Left ventricle myocardium superior (tissue), 1 donor: ENCODE measurements at regions of chr3 and their contacts with region 1.

Region 1: DNA sequence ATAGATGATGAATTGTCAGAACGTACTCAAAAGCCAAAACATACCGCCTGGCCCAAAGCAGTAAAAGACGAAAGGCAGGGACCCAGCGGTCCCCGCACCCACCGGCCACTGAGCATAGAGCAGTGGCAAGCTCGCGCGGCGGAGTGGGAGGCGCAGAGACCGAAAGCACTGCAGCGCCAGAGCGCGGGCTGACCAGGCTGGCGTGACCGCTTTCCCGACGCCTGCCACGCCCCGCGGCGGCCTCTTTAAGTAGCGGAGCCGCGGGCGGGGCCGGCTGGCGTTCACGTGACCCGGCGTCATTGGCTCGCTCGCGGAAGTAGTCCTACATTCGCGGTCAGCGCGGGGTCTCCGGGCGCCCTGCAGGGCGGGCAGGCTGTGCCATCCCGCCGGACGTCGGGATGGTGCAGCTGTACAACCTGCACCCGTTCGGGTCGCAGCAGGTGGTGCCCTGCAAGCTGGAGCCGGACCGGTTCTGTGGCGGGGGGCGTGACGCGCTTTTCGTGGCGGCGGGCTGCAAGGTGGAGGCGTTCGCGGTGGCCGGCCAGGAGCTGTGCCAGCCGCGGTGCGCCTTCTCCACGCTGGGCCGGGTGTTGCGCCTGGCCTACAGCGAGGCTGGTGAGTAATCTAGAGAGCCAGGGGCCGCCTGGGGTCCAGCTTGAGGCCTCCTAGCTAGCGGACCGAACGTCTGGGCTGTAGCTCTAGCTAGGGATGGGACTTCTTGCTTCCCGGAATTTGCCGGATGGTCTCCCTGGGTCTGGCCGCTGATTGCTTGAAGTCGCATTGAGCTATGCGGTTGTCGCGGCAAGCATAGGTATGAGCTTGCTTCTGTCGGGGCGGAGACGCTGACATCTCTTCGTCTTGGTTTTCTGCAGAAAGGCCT is at the start of gene HPS3:
- DNase-seq: peak; percentile 97
- ATAC-seq: peak; percentile 100
- total RNA-seq, gene HPS3: 5.8 TPM

Region 2: DNA sequence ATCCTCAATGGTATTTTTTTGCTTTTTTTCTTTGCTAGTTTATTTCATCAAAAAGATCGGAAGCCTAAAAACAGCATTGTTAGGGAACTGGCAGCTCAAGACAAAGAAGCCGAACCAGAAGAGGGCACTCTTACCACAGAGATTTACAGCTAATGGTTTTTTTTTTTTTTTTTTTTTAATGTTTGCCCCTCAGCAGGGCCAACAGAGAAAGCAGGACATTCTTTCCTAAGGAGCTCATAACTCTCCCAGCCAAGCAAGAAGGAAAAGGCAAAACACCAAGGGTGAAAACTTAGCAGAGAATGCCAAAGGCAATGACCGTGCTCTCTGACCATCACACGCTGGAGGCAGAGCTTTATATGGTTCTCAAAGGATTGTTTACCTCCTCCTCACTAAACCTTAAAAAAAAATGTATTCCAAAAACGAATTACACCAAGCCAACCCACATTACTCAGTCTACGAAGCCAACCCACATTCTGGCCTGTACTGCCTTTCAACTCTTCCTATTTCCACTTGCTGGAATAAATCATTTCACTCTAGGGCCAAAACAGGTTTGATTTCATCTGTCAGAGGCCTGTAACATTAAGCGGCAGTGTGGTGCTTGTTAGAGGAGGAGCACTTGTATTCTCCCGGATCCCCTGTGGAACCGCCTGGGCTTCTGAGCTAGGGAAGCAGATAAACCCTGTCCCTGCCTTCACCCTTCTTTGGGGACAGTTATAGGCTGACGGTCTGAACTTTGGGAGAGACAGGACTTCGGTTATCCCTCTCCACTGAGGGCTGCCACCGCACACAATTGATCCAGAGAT is 173.8 kb before region 1 on chr3:
- intact Hi-C with region 1: loop called (anchors 10 kb)
- DNase-seq: no peak
- ATAC-seq: peak; percentile 95

Region 3: GRCh38 chr3:149473357-149474249 is 344.0 kb after region 1 on chr3:
- intact Hi-C with region 1: loop called (anchors 10 kb)
- DNase-seq: no peak
- ATAC-seq: peak; percentile 61